ENCODE measurements at regions of chr7 and their contacts with region 1.

Region 1: DNA sequence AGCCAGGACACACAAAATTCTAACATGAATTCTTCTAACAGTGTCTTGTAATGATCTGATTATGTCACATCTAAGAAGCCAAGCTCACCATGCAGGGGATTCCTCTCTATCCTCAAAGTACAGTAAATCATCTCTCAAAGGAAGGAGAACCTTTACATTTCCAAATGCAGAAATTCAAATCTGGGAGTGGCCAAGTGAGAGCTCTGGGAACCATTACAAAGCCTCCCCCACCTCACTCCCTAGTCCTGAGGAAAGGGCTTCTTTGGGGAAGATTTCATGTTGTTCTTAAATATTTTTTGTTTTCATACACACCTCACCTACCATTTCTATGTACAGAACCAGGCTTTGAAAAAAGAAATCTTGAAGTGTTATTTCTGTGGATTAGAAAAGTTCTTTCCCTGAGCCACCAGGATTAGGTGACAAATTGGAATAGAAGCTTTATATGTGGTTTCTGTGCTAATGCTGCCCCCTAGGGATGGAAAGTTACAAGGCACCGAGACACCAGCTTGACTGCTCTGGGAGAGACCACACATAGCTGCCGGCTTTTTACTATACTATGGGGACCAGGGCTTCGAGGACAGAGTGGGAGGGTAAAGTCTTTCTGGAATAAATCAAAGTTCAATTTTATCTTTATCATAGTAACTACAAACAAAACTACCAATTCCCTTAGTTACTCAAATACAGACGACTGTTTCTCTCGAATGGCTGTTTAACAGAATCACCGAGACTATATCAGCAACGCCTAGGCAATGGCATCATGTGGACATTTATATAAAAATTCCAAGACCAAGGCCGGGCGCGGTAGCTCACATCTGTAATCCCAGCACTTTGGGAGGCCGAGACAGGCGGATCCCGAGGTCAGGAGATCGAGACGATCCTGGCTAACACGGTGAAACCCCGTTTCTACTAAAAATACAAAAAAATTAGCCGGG is 116.1 kb downstream of the RNF216 start:
- DNase-seq: peak; percentile 53
- ATAC-seq: peak; percentile 86

Region 2: GRCh38 chr7:5494683-5495561 is 170.4 kb before region 1 on chr7:
- intact Hi-C with region 1: loop called (anchors 5 kb)
- DNase-seq: peak; percentile 88
- ATAC-seq: peak; percentile 84

Region 3: GRCh38 chr7:5557920-5558401 is 107.4 kb before region 1 on chr7:
- intact Hi-C with region 1: loop called (anchors 2 kb)
- DNase-seq: peak; percentile 91
- ATAC-seq: peak; percentile 52

Region 4: DNA sequence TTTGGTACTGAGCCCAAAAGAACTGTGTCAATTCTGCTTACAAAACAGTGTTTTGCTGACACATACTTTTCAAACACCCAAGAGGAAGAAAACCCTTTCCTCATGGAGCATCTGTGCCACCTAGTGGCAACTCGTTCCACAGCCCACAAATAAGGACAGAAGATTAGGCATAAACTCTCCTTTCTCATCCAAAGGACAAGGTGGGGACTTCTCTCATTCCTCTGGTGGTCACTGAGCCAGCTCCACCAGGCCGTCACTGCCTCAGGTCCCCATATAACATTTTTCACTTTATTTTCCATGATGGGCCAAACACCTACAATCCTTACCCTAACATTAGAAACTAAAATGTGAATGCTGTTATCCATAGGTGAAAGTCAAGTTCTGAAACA is 39.2 kb after region 1 on chr7:
- intact Hi-C with region 1: loop called (anchors 5 kb)
- DNase-seq: peak; percentile 78
- ATAC-seq: peak; percentile 81